Common myeloid progenitor, CD34-positive (primary cell): ENCODE measurements at regions of chr18 and their contacts with region 1.

Region 1: GRCh38 chr18:23515911-23516546 is 12.7 kb downstream of the RMC1 start:
- DNase-seq: peak; percentile 71 to 83 (median 76)
- H3K4me3 ChIP-seq: no peak overlapping the region
- H3K27ac ChIP-seq: no peak overlapping the region
- H3K4me1 ChIP-seq: no peaks in the 10 kb centered on the region
- H3K27me3 ChIP-seq: no peaks in the 10 kb centered on the region

Region 2: DNA sequence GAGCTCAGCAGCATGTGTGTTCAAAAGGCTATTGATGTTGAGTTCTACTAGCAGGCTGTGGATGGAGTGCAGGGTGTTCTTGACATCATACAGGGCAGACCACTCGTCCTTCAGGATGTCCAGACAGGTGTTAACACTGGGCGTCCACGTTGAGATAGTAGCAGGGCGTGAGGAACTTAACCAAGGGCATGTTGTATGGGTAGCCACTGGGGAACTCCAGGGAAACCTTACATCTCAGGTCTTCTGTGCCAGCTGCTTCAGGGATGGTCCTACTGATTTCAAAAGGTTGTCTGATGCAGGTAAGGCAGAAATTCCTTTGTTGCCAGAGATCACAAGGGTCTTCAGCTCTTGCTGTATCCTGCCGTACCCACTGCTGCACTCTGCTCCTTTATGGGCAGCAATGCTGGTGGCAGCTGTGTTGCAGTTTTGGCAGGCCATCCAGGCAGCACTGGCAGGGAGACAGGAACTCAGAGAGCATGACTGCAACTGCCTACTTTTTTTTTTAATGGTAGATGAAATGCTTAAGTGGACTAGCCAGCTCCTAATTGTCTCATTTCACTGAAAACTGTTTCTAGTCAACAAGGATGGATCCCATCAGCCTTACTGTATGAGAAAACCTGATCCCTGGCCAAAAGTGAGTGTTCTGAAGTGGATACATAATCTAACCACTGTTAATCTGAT is 615.3 kb before region 1 on chr18:
- CTCF ChIA-PET with region 1: no interaction called
- POLR2A ChIA-PET with region 1: no interaction called
- DNase-seq: no peak
- H3K4me3 ChIP-seq: no peak overlapping the region
- H3K27ac ChIP-seq: no peak overlapping the region
- H3K4me1 ChIP-seq: no peaks in the 10 kb centered on the region
- H3K27me3 ChIP-seq: no peaks in the 10 kb centered on the region

Region 3: GRCh38 chr18:23337599-23338444 is 178.2 kb before region 1 on chr18:
- CTCF ChIA-PET with region 1: no interaction called
- POLR2A ChIA-PET with region 1: no interaction called
- DNase-seq: peak; percentile 29 to 46 (median 40)
- H3K4me3 ChIP-seq: no peak overlapping the region
- H3K27ac ChIP-seq: no peak overlapping the region
- H3K4me1 ChIP-seq: no peaks in the 10 kb centered on the region
- H3K27me3 ChIP-seq: no peaks in the 10 kb centered on the region

Region 4: GRCh38 chr18:23462876-23463275 is 53.2 kb before region 1 on chr18:
- CTCF ChIA-PET with region 1: no interaction called
- POLR2A ChIA-PET with region 1: no interaction called
- DNase-seq: no peak
- H3K4me3 ChIP-seq: no peak overlapping the region
- H3K27ac ChIP-seq: peak overlapping the region in 1 of 2 experiments; percentile 27
- H3K4me1 ChIP-seq: peaks cover 0 to 14% (median 3%) of the 10 kb centered on the region in 4 experiments
- H3K27me3 ChIP-seq: no peaks in the 10 kb centered on the region

Region 5: GRCh38 chr18:23503038-23503962 is 12.7 kb before region 1 on chr18 and contains the start of gene RMC1:
- CTCF ChIA-PET with region 1: interaction called, 23 read pairs
- POLR2A ChIA-PET with region 1: no interaction called
- DNase-seq: peak; percentile 94 to 97 (median 97)
- H3K4me3 ChIP-seq: peak within 1 kb of the TSS; percentile 68 to 92 (median 85)
- H3K27ac ChIP-seq: peak within 1 kb of the TSS; percentile 84 to 94
- H3K4me1 ChIP-seq: peaks cover 24 to 57% (median 49%) of the 10 kb centered on the region in 4 experiments
- H3K27me3 ChIP-seq: no peaks in the 10 kb centered on the region

Region 6: GRCh38 chr18:23528580-23529472 is 12.8 kb after region 1 on chr18:
- CTCF ChIA-PET with region 1: interaction called, 10 read pairs
- POLR2A ChIA-PET with region 1: no interaction called
- DNase-seq: no peak
- H3K4me3 ChIP-seq: no peak overlapping the region
- H3K27ac ChIP-seq: peak overlapping the region in 1 of 2 experiments; percentile 54
- H3K4me1 ChIP-seq: no peaks in the 10 kb centered on the region
- H3K27me3 ChIP-seq: no peaks in the 10 kb centered on the region

Region 7: DNA sequence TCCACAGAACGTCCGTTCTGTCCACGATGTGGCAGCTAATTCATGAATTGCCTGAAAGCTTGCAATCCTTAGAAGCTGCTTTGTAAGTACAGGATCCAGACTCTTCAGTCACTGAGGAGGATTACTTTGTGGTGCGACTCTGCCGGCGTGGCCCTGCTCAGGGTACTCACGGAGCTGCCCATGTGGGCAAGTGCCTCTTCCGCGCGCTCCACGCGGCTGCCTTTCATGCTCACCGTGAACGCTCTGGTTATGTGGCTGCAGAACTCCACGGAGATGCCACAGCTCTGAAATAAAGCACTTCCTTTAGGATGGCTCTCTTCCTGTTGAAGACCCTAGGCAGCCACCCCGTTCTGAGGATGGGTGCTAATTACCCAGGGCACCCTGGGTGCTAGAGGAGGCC is 18.2 kb after region 1 on chr18:
- CTCF ChIA-PET with region 1: interaction called, 10 read pairs
- POLR2A ChIA-PET with region 1: no interaction called
- DNase-seq: no peak
- H3K4me3 ChIP-seq: no peak overlapping the region
- H3K27ac ChIP-seq: no peak overlapping the region
- H3K4me1 ChIP-seq: peaks cover 0 to 6% (median 5%) of the 10 kb centered on the region in 4 experiments
- H3K27me3 ChIP-seq: no peaks in the 10 kb centered on the region

Region 8: GRCh38 chr18:23540867-23541266 is 24.8 kb after region 1 on chr18:
- CTCF ChIA-PET with region 1: interaction called, 10 read pairs
- POLR2A ChIA-PET with region 1: no interaction called
- DNase-seq: peak; percentile 80 to 93 (median 91)
- H3K4me3 ChIP-seq: peak overlapping the region in 2 of 7 experiments; percentile 13 to 48
- H3K27ac ChIP-seq: peak overlapping the region in 1 of 2 experiments; percentile 46
- H3K4me1 ChIP-seq: peaks cover 10 to 42% (median 36%) of the 10 kb centered on the region in 4 experiments
- H3K27me3 ChIP-seq: no peaks in the 10 kb centered on the region

Region 9: DNA sequence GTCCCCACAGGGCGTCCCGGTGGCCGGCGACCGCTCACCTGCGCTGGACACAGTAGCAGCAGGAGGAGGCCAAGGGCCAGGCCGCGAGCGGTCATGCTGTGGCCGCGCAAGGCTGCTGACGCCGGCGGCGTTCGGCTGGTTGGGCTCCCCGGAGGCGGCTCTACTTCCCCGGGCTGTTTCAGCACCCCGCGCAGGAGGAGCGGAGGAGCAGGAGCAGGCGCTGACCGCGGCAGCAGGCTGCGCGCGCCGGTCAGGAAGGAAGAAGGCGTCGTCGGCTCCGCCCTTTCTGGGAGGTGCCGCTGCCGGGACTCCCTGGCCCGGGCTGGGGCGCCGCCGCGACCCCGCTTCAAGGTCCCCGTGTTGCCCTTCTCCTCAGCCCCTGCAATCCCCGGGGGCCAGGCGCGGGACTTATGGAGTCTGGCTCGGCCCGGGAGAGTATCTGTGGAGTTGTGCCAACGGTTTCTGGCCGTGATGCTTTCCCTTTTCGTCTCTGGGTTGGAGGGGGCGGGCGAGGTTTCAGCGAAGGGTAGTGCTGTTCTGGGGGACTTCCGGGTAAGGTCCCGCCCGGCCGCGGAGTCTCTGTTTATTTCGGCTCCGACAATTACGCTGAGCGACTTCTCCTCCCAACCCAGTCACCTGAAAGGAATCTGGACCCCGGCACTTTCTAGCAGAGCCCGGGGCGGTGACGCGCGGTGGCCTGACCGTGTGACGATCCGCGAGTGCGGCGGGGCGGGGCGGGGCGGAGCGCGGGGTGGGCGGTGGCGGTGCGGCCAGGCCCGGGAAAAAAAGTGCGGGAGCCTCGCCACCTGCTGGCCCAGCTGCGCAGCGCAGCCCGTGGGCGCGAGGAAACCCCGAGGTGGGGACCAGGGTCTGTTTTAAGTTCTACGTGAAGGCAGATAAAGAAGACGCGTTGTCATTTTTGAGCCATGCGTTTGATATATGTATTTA is 70.5 kb after region 1 on chr18 and contains the start of gene NPC1:
- CTCF ChIA-PET with region 1: interaction called, 23 read pairs
- POLR2A ChIA-PET with region 1: interaction called, 3 read pairs
- DNase-seq: peak; percentile 89 to 94 (median 93)
- H3K4me3 ChIP-seq: peak within 1 kb of the TSS; percentile 84 to 94 (median 91)
- H3K27ac ChIP-seq: peak within 1 kb of the TSS; percentile 95 to 98
- H3K4me1 ChIP-seq: peaks cover 7 to 20% (median 15%) of the 10 kb centered on the region in 4 experiments
- H3K27me3 ChIP-seq: peaks cover 0 to 2% (median 0%) of the 10 kb centered on the region in 5 experiments